HepG2 (cell line): ENCODE measurements at regions of chr16 and their contacts with region 1.

Region 1: DNA sequence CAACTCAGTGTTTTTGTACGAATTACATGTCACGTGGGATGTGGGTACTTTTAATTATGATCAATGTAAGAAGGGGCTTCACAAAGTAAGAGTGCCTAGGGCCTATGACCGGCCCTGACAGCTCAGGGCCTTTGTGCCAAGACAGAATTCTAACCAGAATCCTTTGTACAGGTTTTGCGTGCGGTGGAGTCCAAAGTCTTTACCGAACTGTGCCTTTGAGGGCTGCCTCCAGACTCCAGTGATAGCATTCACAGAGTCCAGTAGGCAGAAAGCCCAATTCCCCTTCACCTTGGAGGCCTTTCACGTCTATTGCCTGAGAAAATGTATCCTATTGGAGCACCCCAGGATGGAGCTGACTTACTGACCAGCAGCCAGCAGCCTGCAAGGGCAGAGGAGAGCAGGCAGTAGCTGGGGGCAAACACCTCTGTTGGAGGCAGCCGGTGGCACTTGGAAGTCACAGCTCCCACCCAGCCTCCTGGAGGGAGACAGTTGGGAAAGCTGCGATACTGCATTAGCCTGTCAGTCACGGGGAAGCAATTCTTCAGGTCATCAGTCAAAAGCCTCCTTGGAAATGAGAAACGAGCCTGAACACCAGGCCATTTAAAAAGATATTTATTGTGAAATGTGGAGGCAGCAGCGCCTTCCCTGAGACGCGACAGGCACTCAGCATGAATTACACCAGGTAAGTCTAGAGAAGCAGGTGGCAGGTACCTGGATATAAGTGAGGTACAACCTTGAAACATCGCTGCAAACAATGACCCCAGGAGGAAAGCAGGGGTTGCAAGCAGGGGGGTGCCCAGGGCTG is 98.1 kb upstream of the CDYL2 start:
- DNase-seq: no peak
- ATAC-seq: peak; percentile 65
- H3K4me3 ChIP-seq: peak overlapping the region in 1 of 3 experiments; percentile 29; a peak in 2 of 6 replicates
- H3K27ac ChIP-seq: no peak overlapping the region
- H3K4me1 ChIP-seq: peaks cover 54% of the 10 kb centered on the region
- H3K27me3 ChIP-seq: no peaks in the 10 kb centered on the region
- CTCF ChIP-seq: no peak
- EP300 ChIP-seq: no peak
- POLR2A ChIP-seq: no peak
- RAD21 ChIP-seq: no peak

Region 2: GRCh38 chr16:80852261-80852872 is 50.1 kb before region 1 on chr16:
- CTCF ChIA-PET with region 1: no interaction called
- POLR2A ChIA-PET with region 1: no interaction called
- in situ Hi-C with region 1: no loop called
- intact Hi-C with region 1: no loop called
- DNase-seq: peak; percentile 31
- ATAC-seq: peak; percentile 74
- H3K4me3 ChIP-seq: no peak overlapping the region
- H3K27ac ChIP-seq: no peak overlapping the region
- H3K4me1 ChIP-seq: no peaks in the 10 kb centered on the region
- H3K27me3 ChIP-seq: no peaks in the 10 kb centered on the region
- CTCF ChIP-seq: peak; percentile 45
- EP300 ChIP-seq: no peak
- POLR2A ChIP-seq: no peak
- RAD21 ChIP-seq: no peak

Region 3: DNA sequence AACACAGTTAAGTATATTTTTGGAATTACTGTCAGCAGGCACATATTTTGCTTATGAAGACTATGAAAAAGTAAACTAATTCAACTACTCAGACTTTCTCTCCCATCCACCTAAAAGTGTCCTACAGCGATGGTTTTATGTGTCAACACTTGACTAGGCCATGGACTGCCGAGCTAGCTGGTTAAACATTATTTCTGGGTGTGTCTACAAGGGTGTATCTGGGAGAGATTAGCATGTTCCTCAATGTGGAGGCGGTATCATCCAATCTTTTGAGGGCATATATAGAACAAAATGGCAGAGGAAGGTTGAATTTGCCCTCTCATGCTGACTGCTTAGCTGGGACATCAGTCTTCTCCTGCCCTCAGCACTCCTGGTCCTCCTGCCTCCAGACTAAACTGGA is 15.4 kb before region 1 on chr16:
- CTCF ChIA-PET with region 1: no interaction called
- POLR2A ChIA-PET with region 1: no interaction called
- in situ Hi-C with region 1: no loop called
- intact Hi-C with region 1: loop called (anchors 2 kb)
- DNase-seq: no peak
- ATAC-seq: peak; percentile 84
- H3K4me3 ChIP-seq: no peak overlapping the region
- H3K27ac ChIP-seq: no peak overlapping the region
- H3K4me1 ChIP-seq: peaks cover 29% of the 10 kb centered on the region
- H3K27me3 ChIP-seq: no peaks in the 10 kb centered on the region
- CTCF ChIP-seq: no peak
- EP300 ChIP-seq: no peak
- POLR2A ChIP-seq: no peak
- RAD21 ChIP-seq: no peak

Region 4: DNA sequence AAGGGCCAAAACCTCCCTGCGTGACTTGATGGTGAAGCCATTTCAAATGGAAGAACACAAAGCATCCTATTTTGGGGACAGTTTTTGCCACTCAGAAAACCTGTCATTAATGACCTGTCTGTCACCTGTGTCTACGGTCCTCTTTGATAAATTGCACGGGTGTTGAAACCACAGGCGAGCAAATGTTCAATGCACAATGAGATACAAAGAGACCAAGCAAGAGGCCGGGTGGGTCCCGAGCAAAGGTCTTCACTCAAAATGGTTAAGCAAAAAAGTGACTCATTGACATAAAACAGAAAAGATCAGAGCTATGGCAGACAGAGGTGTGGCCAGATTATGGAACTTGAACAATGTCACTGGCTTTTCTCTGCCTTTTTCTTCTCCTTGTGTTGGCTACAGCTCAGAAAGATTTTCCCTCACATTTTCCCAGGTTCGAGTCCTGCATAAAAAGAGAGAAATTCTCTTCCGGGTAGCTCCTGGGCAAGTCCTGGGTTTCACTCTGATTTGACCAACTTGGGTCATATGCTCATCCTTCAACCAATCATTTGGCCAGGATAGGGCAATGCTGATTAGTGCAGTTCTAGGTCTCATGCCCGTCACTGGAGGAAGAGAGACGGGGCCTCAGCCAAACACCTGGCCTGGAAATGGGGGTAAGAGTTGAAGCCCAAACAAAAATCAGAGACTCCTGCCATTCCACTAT is 12.0 kb after region 1 on chr16:
- CTCF ChIA-PET with region 1: no interaction called
- POLR2A ChIA-PET with region 1: no interaction called
- in situ Hi-C with region 1: no loop called
- intact Hi-C with region 1: loop called (anchors 1 kb)
- DNase-seq: peak; percentile 92
- ATAC-seq: peak; percentile 86
- H3K4me3 ChIP-seq: peak overlapping the region in 2 of 3 experiments; percentile 6 to 18; a peak in 2 of 6 replicates
- H3K27ac ChIP-seq: peak overlapping the region; percentile 31
- H3K4me1 ChIP-seq: peaks cover 55% of the 10 kb centered on the region
- H3K27me3 ChIP-seq: no peaks in the 10 kb centered on the region
- CTCF ChIP-seq: no peak
- EP300 ChIP-seq: peak in 1 of 2 experiments; percentile 89; a peak in 2 of 4 replicates
- POLR2A ChIP-seq: no peak
- RAD21 ChIP-seq: no peak